GM12878 (cell line): ENCODE measurements at regions of chr10 and their contacts with region 1.

Region 1: GRCh38 chr10:84156768-84157167 is 16.8 kb upstream of the GPR15LG start:
- DNase-seq: no peak
- ATAC-seq: peak; percentile 46
- H3K4me3 ChIP-seq: no peak overlapping the region
- H3K27ac ChIP-seq: no peak overlapping the region
- H3K4me1 ChIP-seq: peaks cover 7% of the 10 kb centered on the region
- H3K27me3 ChIP-seq: no peaks in the 10 kb centered on the region
- CTCF ChIP-seq: no peak
- EP300 ChIP-seq: no peak
- POLR2A ChIP-seq: peak; percentile 66
- RAD21 ChIP-seq: no peak

Region 2: DNA sequence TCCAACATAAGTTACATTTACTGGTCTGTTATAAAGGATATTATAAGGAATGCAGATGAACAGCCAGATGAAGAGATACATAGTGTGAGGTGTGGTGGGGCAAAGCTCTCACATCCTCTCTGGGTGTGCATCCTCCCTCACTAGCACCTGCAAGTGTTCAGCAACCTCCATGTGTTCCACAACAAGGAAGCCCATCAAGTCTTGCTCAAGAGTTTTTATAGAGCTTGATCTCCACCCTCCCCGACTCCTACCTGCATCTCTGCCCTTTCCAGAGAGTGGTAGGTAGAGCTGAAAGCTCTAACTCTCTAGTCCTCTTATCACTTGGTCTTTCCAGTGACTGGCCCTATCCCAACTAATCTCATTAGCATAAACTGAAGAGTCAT is 30.0 kb before region 1 on chr10:
- CTCF ChIA-PET with region 1: no interaction called
- POLR2A ChIA-PET with region 1: no interaction called
- RAD21 ChIA-PET with region 1: no interaction called
- SMC1A ChIA-PET with region 1: no interaction called
- in situ Hi-C with region 1: no loop called
- intact Hi-C with region 1: no loop called
- DNase-seq: no peak
- ATAC-seq: no peak
- H3K4me3 ChIP-seq: no peak overlapping the region
- H3K27ac ChIP-seq: no peak overlapping the region
- H3K4me1 ChIP-seq: no peaks in the 10 kb centered on the region
- H3K27me3 ChIP-seq: no peaks in the 10 kb centered on the region; a peak in 1 of 4 replicates
- CTCF ChIP-seq: no peak
- EP300 ChIP-seq: no peak
- POLR2A ChIP-seq: no peak
- RAD21 ChIP-seq: no peak

Region 3: DNA sequence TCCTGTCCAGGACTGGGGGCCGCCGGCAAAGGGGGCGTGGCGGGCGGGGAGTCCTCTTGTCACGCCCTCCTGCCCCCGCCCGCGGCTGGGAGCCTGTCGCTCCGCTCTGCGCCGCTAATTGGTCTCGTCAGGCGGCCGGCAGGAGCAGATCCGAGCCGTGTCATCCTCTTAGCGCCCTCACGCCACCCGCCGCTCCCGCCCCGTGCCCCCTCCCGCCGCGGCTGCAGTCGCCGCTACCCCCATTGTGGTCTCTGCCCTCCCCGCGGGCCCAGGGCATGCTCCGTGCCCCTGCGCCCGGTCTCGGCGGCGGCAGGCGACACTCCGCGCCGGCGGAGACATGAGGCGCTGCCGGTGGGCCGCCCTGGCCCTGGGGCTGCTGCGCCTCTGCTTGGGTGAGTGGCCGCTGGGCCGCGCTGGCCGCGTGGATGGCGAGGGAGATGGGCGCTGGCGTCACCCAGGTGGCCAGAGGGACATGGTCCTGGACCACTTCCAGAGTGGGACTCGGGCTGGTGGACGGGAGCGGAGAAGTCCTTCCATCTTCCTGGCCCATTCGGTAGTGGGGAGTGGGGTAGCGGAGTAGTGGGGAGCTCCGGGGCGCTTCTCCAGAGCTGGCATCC is 37.8 kb after region 1 on chr10 and contains the start of gene CDHR1:
- CTCF ChIA-PET with region 1: interaction called, 788 read pairs
- POLR2A ChIA-PET with region 1: no interaction called
- RAD21 ChIA-PET with region 1: no interaction called
- SMC1A ChIA-PET with region 1: no interaction called
- in situ Hi-C with region 1: loop called (anchors 5 kb)
- intact Hi-C with region 1: no loop called
- DNase-seq: no peak
- ATAC-seq: peak; percentile 85
- H3K4me3 ChIP-seq: peak within 1 kb of the TSS; percentile 51
- H3K27ac ChIP-seq: no peak within 1 kb of the TSS
- H3K4me1 ChIP-seq: peaks cover 3% of the 10 kb centered on the region
- H3K27me3 ChIP-seq: peaks cover 18 to 29% of the 10 kb centered on the region in 2 experiments
- CTCF ChIP-seq: no peak
- EP300 ChIP-seq: no peak
- POLR2A ChIP-seq: no peak
- RAD21 ChIP-seq: no peak
- polyA plus RNA-seq, gene CDHR1: 0.20 to 0.24 TPM